ENCODE measurements at regions of chr5 and their contacts with region 1.

Region 1: GRCh38 chr5:152532714-152533113 is 127.6 kb upstream of the NMUR2 start:
- DNase-seq: no peak
- ATAC-seq: no peak
- H3K4me3 ChIP-seq: no peak overlapping the region
- H3K4me3 Mint-ChIP-seq: no peak overlapping the region
- H3K27ac ChIP-seq: no peak overlapping the region
- H3K27ac Mint-ChIP-seq: no peak overlapping the region
- H3K4me1 ChIP-seq: peaks cover 0 to 4% of the 10 kb centered on the region in 2 donors
- H3K4me1 Mint-ChIP-seq: peaks cover 7 to 16% (median 12%) of the 10 kb centered on the region in 7 donors
- H3K27me3 ChIP-seq: no peaks in the 10 kb centered on the region
- H3K27me3 Mint-ChIP-seq: peaks cover 0 to 24% (median 0%) of the 10 kb centered on the region in 5 donors

Region 2: GRCh38 chr5:152622628-152623027 is 89.9 kb after region 1 on chr5:
- CTCF ChIA-PET with region 1: no interaction called
- POLR2A ChIA-PET with region 1: no interaction called
- intact Hi-C with region 1: no loop called
- DNase-seq: no peak
- ATAC-seq: no peak
- H3K4me3 ChIP-seq: no peak overlapping the region
- H3K4me3 Mint-ChIP-seq: no peak overlapping the region
- H3K27ac ChIP-seq: no peak overlapping the region
- H3K27ac Mint-ChIP-seq: no peak overlapping the region
- H3K4me1 ChIP-seq: no peaks in the 10 kb centered on the region
- H3K4me1 Mint-ChIP-seq: no peaks in the 10 kb centered on the region
- H3K27me3 ChIP-seq: no peaks in the 10 kb centered on the region
- H3K27me3 Mint-ChIP-seq: no peaks in the 10 kb centered on the region

Region 3: DNA sequence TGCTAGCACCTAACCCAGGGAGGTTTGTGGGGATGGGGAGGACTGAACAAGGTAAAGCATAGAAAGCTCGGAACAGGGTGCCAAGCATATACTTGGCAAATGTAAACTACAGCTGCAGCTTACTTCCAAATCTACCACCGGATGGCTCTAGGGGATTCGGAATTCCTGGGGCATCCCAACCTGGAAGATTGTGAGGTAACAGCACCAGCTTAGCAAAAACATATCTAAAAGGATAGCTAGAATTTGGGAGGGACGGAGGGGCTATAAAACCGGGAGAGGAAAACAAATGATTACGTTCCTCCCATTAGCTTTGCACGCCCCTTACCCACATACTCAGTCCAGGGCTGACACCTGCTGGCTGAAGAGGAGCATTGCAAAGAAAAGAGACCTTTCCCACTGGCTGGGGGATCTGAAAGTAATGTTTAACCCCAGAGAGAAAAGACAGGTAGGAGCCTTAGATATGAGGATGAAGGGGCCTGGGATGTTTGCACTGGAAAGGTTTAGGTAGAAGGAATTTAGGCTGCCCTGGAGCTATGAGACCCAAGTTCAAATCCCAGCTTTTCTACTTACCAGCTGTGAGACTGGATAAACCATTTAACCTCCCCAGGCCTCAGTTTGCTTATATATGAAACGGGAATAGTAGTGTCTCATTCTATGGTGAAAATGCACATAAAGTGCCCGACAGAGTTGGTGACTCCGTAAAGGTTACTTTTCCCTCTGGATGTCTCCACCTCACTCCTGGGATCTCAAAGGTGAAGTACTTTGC is 1432.3 kb after region 1 on chr5:
- CTCF ChIA-PET with region 1: interaction called, 3 read pairs
- POLR2A ChIA-PET with region 1: no interaction called
- intact Hi-C with region 1: loop called in 1 of 2 experiments (anchors 1 kb)
- DNase-seq: peak in 6 of 9 donors; percentile 8 to 33 (median 14)
- ATAC-seq: peak; percentile 73
- H3K4me3 ChIP-seq: no peak overlapping the region
- H3K4me3 Mint-ChIP-seq: no peak overlapping the region
- H3K27ac ChIP-seq: no peak overlapping the region
- H3K27ac Mint-ChIP-seq: no peak overlapping the region
- H3K4me1 ChIP-seq: peaks cover 0 to 11% of the 10 kb centered on the region in 2 donors
- H3K4me1 Mint-ChIP-seq: peaks cover 0 to 17% (median 0%) of the 10 kb centered on the region in 7 donors
- H3K27me3 ChIP-seq: no peaks in the 10 kb centered on the region
- H3K27me3 Mint-ChIP-seq: peaks cover 0 to 8% (median 5%) of the 10 kb centered on the region in 5 donors

Region 4: DNA sequence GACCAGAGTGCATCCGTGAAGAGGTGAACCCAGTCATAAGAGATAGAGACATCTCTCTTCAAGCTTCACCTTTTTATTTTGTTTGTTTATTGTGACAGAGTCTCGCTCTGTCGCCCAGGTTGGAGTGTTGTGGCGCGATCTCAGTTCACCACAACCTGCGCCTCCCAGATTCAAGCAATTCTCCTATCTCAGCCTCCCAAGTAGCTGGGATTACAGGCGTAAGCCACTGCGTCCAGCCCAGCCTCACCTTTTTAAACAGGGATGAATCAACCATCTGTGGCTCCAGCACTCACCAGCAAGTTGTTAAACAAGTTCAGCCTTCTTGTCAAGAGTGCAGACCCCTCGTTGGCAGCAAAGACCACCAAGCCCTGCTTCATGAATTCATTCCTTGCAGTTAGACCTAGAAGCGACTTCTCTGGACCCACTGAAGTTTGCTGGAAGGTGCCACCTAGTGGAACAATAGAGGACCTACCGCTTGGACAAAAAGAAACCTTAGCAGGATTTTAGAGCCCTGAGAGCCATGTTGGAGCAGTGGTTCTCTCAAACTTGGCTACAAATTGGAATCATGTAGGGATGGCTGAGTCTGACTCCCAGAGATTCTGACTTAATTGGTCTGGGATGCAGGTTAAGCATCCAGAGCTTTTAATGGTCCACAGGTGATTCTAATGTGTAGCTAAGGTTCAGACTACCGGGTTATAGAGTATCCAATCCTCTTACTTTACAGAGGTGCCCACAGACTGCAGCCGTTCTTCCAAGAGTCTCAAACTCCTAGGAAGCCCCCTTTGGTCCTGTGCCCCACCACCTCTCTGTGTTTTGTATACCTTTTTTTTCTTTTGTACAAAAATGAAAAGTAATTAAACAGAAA is 1647.4 kb after region 1 on chr5:
- CTCF ChIA-PET with region 1: no interaction called
- POLR2A ChIA-PET with region 1: no interaction called
- intact Hi-C with region 1: loop called in 1 of 2 experiments (anchors 2 kb)
- DNase-seq: peak in 6 of 9 donors; percentile 28 to 61 (median 43)
- ATAC-seq: peak; percentile 92
- H3K4me3 ChIP-seq: no peak overlapping the region
- H3K4me3 Mint-ChIP-seq: no peak overlapping the region
- H3K27ac ChIP-seq: no peak overlapping the region
- H3K27ac Mint-ChIP-seq: no peak overlapping the region
- H3K4me1 ChIP-seq: peaks cover 0 to 5% of the 10 kb centered on the region in 2 donors
- H3K4me1 Mint-ChIP-seq: peaks cover 0 to 31% (median 0%) of the 10 kb centered on the region in 7 donors
- H3K27me3 ChIP-seq: no peaks in the 10 kb centered on the region
- H3K27me3 Mint-ChIP-seq: peaks cover 0 to 22% (median 11%) of the 10 kb centered on the region in 5 donors